H1 (cell line): ENCODE measurements at regions of chr5 and their contacts with region 1.

Region 1: GRCh38 chr5:168552146-168552545 is 23.0 kb downstream of the FBLL1 start:
- DNase-seq: no peak
- H3K4me3 ChIP-seq: no peak overlapping the region
- H3K27ac ChIP-seq: no peak overlapping the region
- H3K4me1 ChIP-seq: no peaks in the 10 kb centered on the region
- H3K27me3 ChIP-seq: no peaks in the 10 kb centered on the region
- CTCF ChIP-seq: no peak
- EP300 ChIP-seq: no peak
- POLR2A ChIP-seq: no peak
- RAD21 ChIP-seq: no peak

Region 2: GRCh38 chr5:168531987-168532864 is 19.9 kb before region 1 on chr5:
- CTCF ChIA-PET with region 1: no interaction called
- POLR2A ChIA-PET with region 1: interaction called, 19 read pairs
- DNase-seq: no peak
- H3K4me3 ChIP-seq: no peak overlapping the region
- H3K27ac ChIP-seq: no peak overlapping the region
- H3K4me1 ChIP-seq: peaks cover 0 to 11% (median 10%) of the 10 kb centered on the region in 4 experiments; a peak in 6 of 7 replicates
- H3K27me3 ChIP-seq: peaks cover 4 to 12% (median 11%) of the 10 kb centered on the region in 4 experiments
- CTCF ChIP-seq: no peak
- EP300 ChIP-seq: no peak
- POLR2A ChIP-seq: no peak
- RAD21 ChIP-seq: no peak

Region 3: GRCh38 chr5:168658394-168658793 is 106.2 kb after region 1 on chr5:
- CTCF ChIA-PET with region 1: no interaction called
- POLR2A ChIA-PET with region 1: no interaction called
- DNase-seq: no peak
- H3K4me3 ChIP-seq: no peak overlapping the region
- H3K27ac ChIP-seq: no peak overlapping the region
- H3K4me1 ChIP-seq: 0 out of 7 replicates have a peak, but pooled peaks cover 0 to 3% (median 0%) of the 10 kb centered on the region in 4 experiments
- H3K27me3 ChIP-seq: no peaks in the 10 kb centered on the region
- CTCF ChIP-seq: no peak
- EP300 ChIP-seq: no peak
- POLR2A ChIP-seq: no peak
- RAD21 ChIP-seq: no peak